MCF 10A (cell line): ENCODE measurements at regions of chr13 and their contacts with region 1.

Region 1: GRCh38 chr13:46947425-46948191 is 50.8 kb upstream of the HTR2A start:
- DNase-seq: no peak
- H3K4me3 Mint-ChIP-seq: no peak overlapping the region
- H3K27ac Mint-ChIP-seq: no peak overlapping the region
- H3K4me1 Mint-ChIP-seq: no peaks in the 10 kb centered on the region
- H3K27me3 Mint-ChIP-seq: no peaks in the 10 kb centered on the region
- CTCF ChIP-seq: no peak

Region 2: DNA sequence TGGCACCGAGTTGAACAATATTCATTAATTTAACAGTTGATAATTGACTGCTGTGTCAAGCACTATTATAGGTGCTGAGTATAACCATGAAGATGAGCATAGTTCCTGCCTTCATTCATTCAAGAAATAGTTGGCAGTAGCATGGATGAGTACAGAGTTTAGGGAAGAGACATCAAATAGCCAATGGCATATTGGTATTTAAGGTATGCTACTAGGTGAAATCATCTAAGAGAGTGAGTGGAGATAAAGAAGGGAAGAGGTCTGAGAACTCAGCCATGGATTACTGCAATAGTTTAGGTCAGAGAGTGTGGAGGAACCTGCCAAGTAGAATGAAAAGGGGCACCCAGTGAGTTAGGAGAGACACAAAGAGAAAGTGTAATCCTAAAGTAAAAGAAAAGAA is 45.9 kb before region 1 on chr13:
- CTCF ChIA-PET with region 1: no interaction called
- POLR2A ChIA-PET with region 1: no interaction called
- intact Hi-C with region 1: no loop called
- DNase-seq: no peak
- H3K4me3 Mint-ChIP-seq: no peak overlapping the region
- H3K27ac Mint-ChIP-seq: no peak overlapping the region
- H3K4me1 Mint-ChIP-seq: peaks cover 18% of the 10 kb centered on the region
- H3K27me3 Mint-ChIP-seq: no peaks in the 10 kb centered on the region
- CTCF ChIP-seq: no peak

Region 3: DNA sequence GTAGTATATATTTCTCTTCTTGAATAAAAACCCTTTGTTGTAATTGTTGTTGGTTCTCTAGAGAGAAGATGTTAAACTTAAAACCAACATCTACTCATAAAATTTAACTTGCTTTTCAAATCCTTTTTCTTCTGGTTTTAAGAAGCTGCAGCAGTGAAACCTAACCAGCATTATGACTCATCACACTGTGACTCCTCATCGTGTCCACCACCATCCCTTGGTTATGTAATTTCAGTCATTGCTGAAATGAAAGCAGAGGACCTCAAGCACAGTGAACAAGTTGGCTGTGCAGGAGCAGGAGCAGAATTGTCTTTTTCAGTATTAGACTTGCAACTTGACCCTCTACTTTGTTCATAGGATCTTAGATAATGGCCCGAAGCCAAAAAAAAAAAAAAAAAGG is 14.1 kb after region 1 on chr13:
- CTCF ChIA-PET with region 1: interaction called, 10 read pairs
- POLR2A ChIA-PET with region 1: interaction called, 4 read pairs
- intact Hi-C with region 1: no loop called
- DNase-seq: peak; percentile 83
- H3K4me3 Mint-ChIP-seq: no peak overlapping the region
- H3K27ac Mint-ChIP-seq: no peak overlapping the region
- H3K4me1 Mint-ChIP-seq: peaks cover 17% of the 10 kb centered on the region
- H3K27me3 Mint-ChIP-seq: no peaks in the 10 kb centered on the region
- CTCF ChIP-seq: no peak

Region 4: GRCh38 chr13:47039106-47039505 is 91.5 kb after region 1 on chr13:
- CTCF ChIA-PET with region 1: no interaction called
- POLR2A ChIA-PET with region 1: no interaction called
- intact Hi-C with region 1: no loop called
- DNase-seq: peak; percentile 59
- H3K4me3 Mint-ChIP-seq: no peak overlapping the region
- H3K27ac Mint-ChIP-seq: no peak overlapping the region
- H3K4me1 Mint-ChIP-seq: no peaks in the 10 kb centered on the region
- H3K27me3 Mint-ChIP-seq: no peaks in the 10 kb centered on the region
- CTCF ChIP-seq: no peak